ENCODE measurements at regions of chr6 and their contacts with region 1.

Region 1: GRCh38 chr6:83859410-83860358 is at the start of gene CYB5R4:
- DNase-seq: peak; percentile 96
- H3K4me3 Mint-ChIP-seq: peak within 1 kb of the TSS; percentile 100
- H3K27ac Mint-ChIP-seq: peak within 1 kb of the TSS; percentile 82
- H3K4me1 Mint-ChIP-seq: peaks cover 28% of the 10 kb centered on the region
- H3K27me3 Mint-ChIP-seq: peaks cover 12% of the 10 kb centered on the region
- total RNA-seq, gene CYB5R4: 23.5 to 24.5 TPM

Region 2: GRCh38 chr6:83192871-83193746 is 666.6 kb before region 1 on chr6 and contains the starts of genes PGM3 and RWDD2A:
- CTCF ChIA-PET with region 1: no interaction called
- intact Hi-C with region 1: loop called (anchors 1 kb)
- DNase-seq: peak; percentile 91
- H3K4me3 Mint-ChIP-seq: peak within 1 kb of the TSS; percentile 96
- H3K27ac Mint-ChIP-seq: peak within 1 kb of the TSS; percentile 89
- H3K4me1 Mint-ChIP-seq: peaks cover 38% of the 10 kb centered on the region
- H3K27me3 Mint-ChIP-seq: peaks cover 2% of the 10 kb centered on the region
- total RNA-seq, gene PGM3: 17.0 to 19.8 TPM
- total RNA-seq, gene RWDD2A: 1.4 TPM

Region 3: GRCh38 chr6:83872386-83873118 is 12.9 kb after region 1 on chr6:
- CTCF ChIA-PET with region 1: interaction called, 7 read pairs
- intact Hi-C with region 1: loop called (anchors 1 kb)
- DNase-seq: no peak
- H3K4me3 Mint-ChIP-seq: no peak overlapping the region
- H3K27ac Mint-ChIP-seq: no peak overlapping the region
- H3K4me1 Mint-ChIP-seq: peaks cover 32% of the 10 kb centered on the region
- H3K27me3 Mint-ChIP-seq: no peaks in the 10 kb centered on the region

Region 4: DNA sequence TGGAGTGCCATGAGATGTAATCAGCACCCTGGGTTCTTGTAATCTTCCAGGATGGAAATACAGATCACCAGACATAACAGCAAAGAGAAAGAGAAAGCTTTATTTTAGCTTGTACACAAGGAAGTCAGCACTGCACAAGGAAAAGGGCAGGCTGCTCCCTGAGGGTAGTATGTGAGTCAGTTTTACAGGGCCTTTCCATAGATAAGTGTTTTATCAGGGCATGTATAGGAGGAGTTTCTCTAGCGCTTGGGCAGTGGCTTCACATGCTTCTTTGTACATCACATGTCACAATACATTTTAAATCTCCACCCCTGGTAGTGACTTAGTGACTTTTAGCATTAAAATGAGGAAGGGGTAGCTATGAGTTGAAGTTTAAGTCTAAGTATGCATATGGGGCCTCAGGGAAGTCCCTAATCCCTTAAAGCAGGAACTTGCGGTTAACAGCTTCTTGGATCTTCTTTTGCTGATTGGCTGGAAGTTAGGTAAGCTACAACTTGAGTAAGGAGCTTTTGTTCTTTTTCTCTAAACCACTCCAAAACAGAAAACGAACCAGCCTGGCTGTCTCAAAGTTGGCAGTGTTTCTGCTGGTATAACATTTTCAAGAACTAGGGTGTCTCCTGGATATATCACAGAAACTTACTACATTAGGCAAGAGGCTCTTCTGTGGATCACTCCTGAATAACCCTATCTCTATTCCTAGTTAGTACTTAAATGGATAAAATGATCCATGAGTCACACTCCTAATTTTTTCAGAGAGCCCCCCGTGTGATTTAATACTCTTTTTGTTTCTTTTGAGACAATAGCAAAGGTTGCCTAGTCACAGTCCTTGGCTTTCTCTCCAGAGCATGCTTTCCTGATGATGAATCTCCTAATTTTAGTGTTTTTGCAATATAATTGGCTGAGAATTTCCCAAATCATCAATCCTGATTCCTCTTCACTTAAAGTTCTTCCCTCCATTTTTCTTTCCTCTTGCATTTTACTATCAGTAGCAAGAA is 234.1 kb after region 1 on chr6:
- CTCF ChIA-PET with region 1: no interaction called
- intact Hi-C with region 1: no loop called
- DNase-seq: no peak
- H3K4me3 Mint-ChIP-seq: no peak overlapping the region
- H3K27ac Mint-ChIP-seq: no peak overlapping the region
- H3K4me1 Mint-ChIP-seq: peaks cover 2% of the 10 kb centered on the region
- H3K27me3 Mint-ChIP-seq: no peaks in the 10 kb centered on the region

Region 5: GRCh38 chr6:84227434-84228197 is 367.9 kb after region 1 on chr6 and contains the start of gene CEP162:
- CTCF ChIA-PET with region 1: no interaction called
- intact Hi-C with region 1: loop called (anchors 1 kb)
- DNase-seq: peak; percentile 91
- H3K4me3 Mint-ChIP-seq: peak within 1 kb of the TSS; percentile 99
- H3K27ac Mint-ChIP-seq: peak within 1 kb of the TSS; percentile 93
- H3K4me1 Mint-ChIP-seq: peaks cover 11% of the 10 kb centered on the region
- H3K27me3 Mint-ChIP-seq: peaks cover 5% of the 10 kb centered on the region
- total RNA-seq, gene CEP162: 4.4 to 5.0 TPM

Region 6: DNA sequence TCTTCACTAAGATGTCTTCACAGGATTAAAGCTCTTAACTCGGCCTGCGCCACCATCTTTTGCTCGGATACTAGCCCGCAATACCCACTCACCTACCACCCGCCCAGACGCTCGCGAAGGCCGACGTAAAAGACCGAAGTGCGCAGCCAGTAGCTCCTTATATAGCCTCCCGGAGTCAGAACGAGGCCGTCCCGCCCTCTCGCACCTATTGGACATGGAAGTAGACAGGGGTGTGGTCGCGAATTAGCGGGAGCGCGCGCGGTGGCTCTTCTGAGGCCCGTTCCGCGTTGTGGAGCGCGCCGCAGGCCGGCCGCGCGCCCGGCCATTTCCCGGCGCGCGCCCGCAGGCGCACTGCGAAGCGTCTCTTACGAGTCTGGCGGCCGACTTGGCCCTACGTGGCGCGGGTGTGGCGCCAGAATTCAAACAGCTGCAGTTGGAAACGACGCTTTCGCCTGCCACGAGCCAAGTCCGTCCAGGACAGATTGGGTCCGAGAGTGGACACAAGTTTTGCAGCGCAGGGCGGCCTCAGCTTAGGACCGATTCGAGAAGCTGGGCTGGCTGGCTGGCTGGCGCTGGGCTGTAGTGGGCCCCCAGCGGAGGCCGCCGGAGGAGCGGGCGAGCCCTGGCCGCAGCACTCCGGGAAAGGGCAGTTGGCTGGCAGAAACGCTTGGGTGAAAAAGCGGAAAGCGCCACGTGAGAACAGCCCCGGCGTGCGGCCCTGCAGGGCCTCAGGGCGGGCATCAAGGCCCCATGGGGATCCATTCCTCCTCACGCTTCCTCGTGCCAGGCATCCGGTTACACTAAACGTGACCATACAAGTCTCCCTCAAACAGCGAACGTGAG is 1819.1 kb after region 1 on chr6:
- CTCF ChIA-PET with region 1: no interaction called
- intact Hi-C with region 1: loop called (anchors 10 kb)
- DNase-seq: peak; percentile 96
- H3K4me3 Mint-ChIP-seq: peak overlapping the region; percentile 97
- H3K27ac Mint-ChIP-seq: peak overlapping the region; percentile 96
- H3K4me1 Mint-ChIP-seq: peaks cover 31% of the 10 kb centered on the region
- H3K27me3 Mint-ChIP-seq: no peaks in the 10 kb centered on the region

Measured in activated naive CD4-positive, alpha-beta T cell treated with anti-CD3 and anti-CD28 coated beads for 36 hours (primary cell).